B cell (primary cell): ENCODE measurements at regions of chr4 and their contacts with region 1.

Region 1: GRCh38 chr4:47914220-47914925 is at the start of gene NFXL1:
- DNase-seq: peak; percentile 95
- ATAC-seq: peak; percentile 94
- H3K4me3 ChIP-seq: peak within 1 kb of the TSS; percentile 85 to 100 (median 99)
- H3K4me3 Mint-ChIP-seq: peak within 1 kb of the TSS; percentile 99
- H3K27ac ChIP-seq: peak within 1 kb of the TSS; percentile 48 to 75
- H3K27ac Mint-ChIP-seq: peak within 1 kb of the TSS; percentile 97
- H3K4me1 ChIP-seq: peaks cover 14 to 17% of the 10 kb centered on the region in 2 donors
- H3K4me1 Mint-ChIP-seq: peaks cover 27% of the 10 kb centered on the region
- H3K27me3 ChIP-seq: no peaks in the 10 kb centered on the region
- H3K27me3 Mint-ChIP-seq: no peaks in the 10 kb centered on the region
- CTCF ChIP-seq: no peak
- total RNA-seq, gene NFXL1: 16.5 and 16.6 TPM in 2 replicates

Region 2: GRCh38 chr4:47836641-47837093 is 77.7 kb before region 1 on chr4:
- CTCF ChIA-PET with region 1: no interaction called
- POLR2A ChIA-PET with region 1: no interaction called
- intact Hi-C with region 1: loop called (anchors 5 kb)
- DNase-seq: peak; percentile 49
- ATAC-seq: peak; percentile 44
- H3K4me3 ChIP-seq: peak overlapping the region; percentile 44 to 73 (median 56)
- H3K4me3 Mint-ChIP-seq: peak overlapping the region; percentile 90
- H3K27ac ChIP-seq: no peak overlapping the region
- H3K27ac Mint-ChIP-seq: no peak overlapping the region
- H3K4me1 ChIP-seq: peaks cover 26 to 28% of the 10 kb centered on the region in 2 donors
- H3K4me1 Mint-ChIP-seq: peaks cover 32% of the 10 kb centered on the region
- H3K27me3 ChIP-seq: peaks cover 0 to 32% (median 21%) of the 10 kb centered on the region in 4 experiments
- H3K27me3 Mint-ChIP-seq: peaks cover 37% of the 10 kb centered on the region
- CTCF ChIP-seq: peak; percentile 31

Region 3: GRCh38 chr4:47933840-47934239 is 19.5 kb after region 1 on chr4:
- CTCF ChIA-PET with region 1: interaction called, 12 read pairs
- POLR2A ChIA-PET with region 1: no interaction called
- intact Hi-C with region 1: no loop called
- DNase-seq: peak; percentile 66
- ATAC-seq: peak; percentile 61
- H3K4me3 ChIP-seq: no peak overlapping the region
- H3K4me3 Mint-ChIP-seq: no peak overlapping the region
- H3K27ac ChIP-seq: no peak overlapping the region
- H3K27ac Mint-ChIP-seq: no peak overlapping the region
- H3K4me1 ChIP-seq: peaks cover 0 to 7% of the 10 kb centered on the region in 2 donors
- H3K4me1 Mint-ChIP-seq: peaks cover 8% of the 10 kb centered on the region
- H3K27me3 ChIP-seq: peaks cover 0 to 7% (median 0%) of the 10 kb centered on the region in 4 experiments
- H3K27me3 Mint-ChIP-seq: peaks cover 15% of the 10 kb centered on the region
- CTCF ChIP-seq: peak; percentile 87

Region 4: DNA sequence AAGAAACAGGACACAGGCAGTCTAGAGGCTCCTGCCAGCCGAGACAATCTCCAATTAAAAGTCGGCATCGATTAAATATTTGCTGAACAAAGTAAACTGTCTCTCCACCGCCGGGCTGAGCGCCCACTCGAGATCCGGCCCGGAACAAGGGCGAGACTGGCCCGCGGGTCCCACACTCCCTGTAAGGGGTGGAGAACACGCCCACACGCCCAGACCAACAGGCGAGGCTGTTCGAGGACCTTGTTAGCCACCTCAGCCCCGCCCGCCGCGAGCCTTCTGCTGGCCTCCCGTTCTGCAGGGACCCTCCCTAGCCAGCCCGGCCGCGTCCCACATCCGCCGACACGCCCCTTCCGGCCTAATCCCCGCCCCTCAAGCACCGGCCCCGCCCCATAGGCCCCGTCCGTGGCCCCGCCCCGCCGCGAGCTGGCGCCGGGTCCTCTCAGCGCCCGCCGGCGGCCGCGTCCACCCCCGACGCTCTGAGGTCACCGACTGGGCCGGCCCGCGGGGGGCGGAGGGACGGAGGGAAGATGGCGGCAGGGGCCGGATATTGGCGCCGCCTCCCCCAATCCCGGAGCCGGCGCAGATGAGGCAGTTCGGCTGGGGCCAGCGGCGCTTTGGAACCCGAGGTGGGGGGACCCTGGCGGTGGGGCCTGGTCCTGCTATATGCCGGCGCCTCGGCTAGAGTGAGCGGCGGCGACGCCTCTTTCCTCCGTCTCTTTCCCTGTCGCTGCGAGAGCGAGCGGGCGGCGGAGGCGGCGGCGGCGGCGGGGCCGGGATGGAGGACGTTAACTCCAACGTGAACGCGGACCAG is 426.8 kb after region 1 on chr4 and contains the start of gene SLAIN2:
- CTCF ChIA-PET with region 1: no interaction called
- POLR2A ChIA-PET with region 1: no interaction called
- intact Hi-C with region 1: loop called (anchors 1 kb)
- DNase-seq: peak; percentile 98
- ATAC-seq: peak; percentile 88
- H3K4me3 ChIP-seq: peak within 1 kb of the TSS; percentile 79 to 96 (median 83)
- H3K4me3 Mint-ChIP-seq: peak within 1 kb of the TSS; percentile 96
- H3K27ac ChIP-seq: peak within 1 kb of the TSS; percentile 93 to 94
- H3K27ac Mint-ChIP-seq: peak within 1 kb of the TSS; percentile 98
- H3K4me1 ChIP-seq: peaks cover 23 to 28% of the 10 kb centered on the region in 2 donors
- H3K4me1 Mint-ChIP-seq: peaks cover 43% of the 10 kb centered on the region
- H3K27me3 ChIP-seq: no peaks in the 10 kb centered on the region
- H3K27me3 Mint-ChIP-seq: no peaks in the 10 kb centered on the region
- CTCF ChIP-seq: peak; percentile 60
- total RNA-seq, gene SLAIN2: 69.1 and 69.2 TPM in 2 replicates

Region 5: DNA sequence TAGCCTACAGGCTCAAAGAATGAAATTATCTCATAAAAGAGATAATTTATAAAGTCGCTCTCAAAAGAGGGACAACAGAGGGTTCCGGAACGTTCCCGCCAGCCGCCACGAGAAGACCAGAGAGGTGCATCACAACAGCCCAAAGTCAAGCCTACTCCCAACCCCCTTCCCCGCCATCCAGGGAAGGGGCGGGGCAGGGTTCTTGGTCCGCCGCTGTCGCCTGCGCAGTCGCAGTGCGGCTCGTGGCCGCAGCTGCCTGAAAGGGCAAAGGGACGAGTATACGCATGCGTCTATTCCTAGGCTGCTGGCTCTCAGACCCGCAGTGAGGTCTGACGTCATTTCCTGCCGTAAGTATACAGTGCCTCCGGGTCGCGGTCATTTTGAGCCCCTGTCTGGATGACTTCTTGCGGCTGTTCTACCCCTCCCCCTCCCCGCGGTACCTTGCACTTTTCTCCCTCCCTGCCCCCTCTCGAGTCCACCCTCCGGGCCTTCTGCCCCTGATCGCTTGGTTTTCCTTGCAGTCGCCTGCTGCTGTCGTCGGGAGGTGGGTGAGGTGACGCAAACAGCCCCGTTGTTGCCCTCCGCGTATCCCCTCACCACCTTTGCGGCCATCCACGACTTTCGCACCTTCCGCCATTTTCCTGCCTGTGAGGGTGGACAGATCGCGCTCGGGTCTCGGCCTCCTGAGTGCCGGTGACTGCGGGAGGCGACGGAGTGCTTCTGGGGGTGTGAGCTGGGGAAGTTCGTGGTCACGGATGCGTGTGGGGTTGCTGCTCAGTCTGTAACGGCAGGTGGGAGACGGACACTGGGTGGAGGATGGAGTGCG is 916.5 kb after region 1 on chr4 and contains the start of gene OCIAD1:
- CTCF ChIA-PET with region 1: no interaction called
- POLR2A ChIA-PET with region 1: no interaction called
- intact Hi-C with region 1: loop called (anchors 2 kb)
- DNase-seq: peak; percentile 99
- ATAC-seq: peak; percentile 95
- H3K4me3 ChIP-seq: peak within 1 kb of the TSS; percentile 81 to 99 (median 93)
- H3K4me3 Mint-ChIP-seq: peak within 1 kb of the TSS; percentile 100
- H3K27ac ChIP-seq: peak within 1 kb of the TSS; percentile 96 to 98
- H3K27ac Mint-ChIP-seq: peak within 1 kb of the TSS; percentile 100
- H3K4me1 ChIP-seq: peaks cover 16% of the 10 kb centered on the region in 2 donors
- H3K4me1 Mint-ChIP-seq: peaks cover 21% of the 10 kb centered on the region
- H3K27me3 ChIP-seq: no peaks in the 10 kb centered on the region
- H3K27me3 Mint-ChIP-seq: no peaks in the 10 kb centered on the region
- CTCF ChIP-seq: no peak
- total RNA-seq, gene OCIAD1: 114 and 119 TPM in 2 replicates